ENCODE measurements at regions of chr14 and their contacts with region 1.

Region 1: DNA sequence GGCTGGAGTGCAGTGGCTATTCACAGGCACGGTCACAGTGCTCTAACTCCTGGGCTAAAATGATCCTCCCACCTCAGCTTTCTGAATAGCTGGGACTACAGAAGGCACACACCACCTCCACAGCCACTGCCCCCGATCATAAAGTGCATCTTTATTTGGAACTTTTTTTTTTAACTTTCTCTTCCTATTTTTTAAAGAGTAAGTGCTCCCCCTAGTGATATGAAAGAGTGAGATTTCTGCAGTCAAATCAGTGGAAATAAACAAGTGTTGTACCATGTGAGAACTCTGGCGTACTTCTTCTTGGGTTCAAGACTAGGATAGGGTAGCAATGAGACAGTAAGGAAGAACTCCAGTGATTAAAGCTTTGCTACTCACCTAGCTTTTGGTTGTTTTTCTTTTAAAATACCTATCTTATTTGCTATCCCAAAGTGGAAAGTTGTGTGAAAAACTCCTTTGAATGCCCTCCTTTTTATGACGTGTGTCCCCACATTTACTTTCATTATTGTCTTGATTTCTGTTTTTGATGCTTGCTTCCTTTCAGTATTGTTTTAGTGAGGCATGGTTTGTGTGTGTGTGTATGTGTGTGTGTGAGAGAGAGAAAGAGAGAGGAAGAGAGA is 6.6 kb downstream of the PPP4R4 start:
- DNase-seq: no peak
- H3K4me3 Mint-ChIP-seq: peak overlapping the region; percentile 59
- H3K27ac Mint-ChIP-seq: peak overlapping the region; percentile 47
- H3K4me1 Mint-ChIP-seq: peaks cover 24% of the 10 kb centered on the region
- H3K27me3 Mint-ChIP-seq: peaks cover 10% of the 10 kb centered on the region

Region 2: DNA sequence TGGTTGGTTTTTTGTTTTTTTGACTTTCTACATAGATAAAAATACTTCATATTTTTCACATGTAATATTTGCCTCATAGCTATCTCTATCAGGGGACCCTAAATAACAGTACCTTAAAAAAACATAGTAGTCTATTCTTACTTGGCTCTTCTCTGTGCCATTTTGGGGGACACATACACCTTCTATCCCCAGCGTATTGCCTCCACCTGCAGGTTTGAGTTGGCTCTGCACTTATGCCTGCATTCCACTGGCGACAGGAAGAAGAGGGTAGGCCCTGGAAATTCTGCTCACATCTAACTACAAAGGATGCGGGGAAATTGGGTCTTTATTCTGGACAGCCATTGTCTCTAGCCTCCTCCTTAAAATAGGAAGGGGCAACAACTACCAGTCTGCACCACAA is 37.5 kb before region 1 on chr14:
- CTCF ChIA-PET with region 1: interaction called, 76 read pairs
- POLR2A ChIA-PET with region 1: no interaction called
- DNase-seq: no peak
- H3K4me3 Mint-ChIP-seq: no peak overlapping the region
- H3K27ac Mint-ChIP-seq: no peak overlapping the region
- H3K4me1 Mint-ChIP-seq: peaks cover 26% of the 10 kb centered on the region
- H3K27me3 Mint-ChIP-seq: peaks cover 4% of the 10 kb centered on the region

Region 3: GRCh38 chr14:94161981-94162380 is 18.8 kb before region 1 on chr14:
- CTCF ChIA-PET with region 1: interaction called, 15 read pairs
- POLR2A ChIA-PET with region 1: interaction called, 20 read pairs
- DNase-seq: no peak
- H3K4me3 Mint-ChIP-seq: no peak overlapping the region
- H3K27ac Mint-ChIP-seq: peak overlapping the region; percentile 29
- H3K4me1 Mint-ChIP-seq: peaks cover 69% of the 10 kb centered on the region
- H3K27me3 Mint-ChIP-seq: no peaks in the 10 kb centered on the region